H1 (cell line): ENCODE measurements at regions of chr18 and their contacts with region 1.

Region 1: DNA sequence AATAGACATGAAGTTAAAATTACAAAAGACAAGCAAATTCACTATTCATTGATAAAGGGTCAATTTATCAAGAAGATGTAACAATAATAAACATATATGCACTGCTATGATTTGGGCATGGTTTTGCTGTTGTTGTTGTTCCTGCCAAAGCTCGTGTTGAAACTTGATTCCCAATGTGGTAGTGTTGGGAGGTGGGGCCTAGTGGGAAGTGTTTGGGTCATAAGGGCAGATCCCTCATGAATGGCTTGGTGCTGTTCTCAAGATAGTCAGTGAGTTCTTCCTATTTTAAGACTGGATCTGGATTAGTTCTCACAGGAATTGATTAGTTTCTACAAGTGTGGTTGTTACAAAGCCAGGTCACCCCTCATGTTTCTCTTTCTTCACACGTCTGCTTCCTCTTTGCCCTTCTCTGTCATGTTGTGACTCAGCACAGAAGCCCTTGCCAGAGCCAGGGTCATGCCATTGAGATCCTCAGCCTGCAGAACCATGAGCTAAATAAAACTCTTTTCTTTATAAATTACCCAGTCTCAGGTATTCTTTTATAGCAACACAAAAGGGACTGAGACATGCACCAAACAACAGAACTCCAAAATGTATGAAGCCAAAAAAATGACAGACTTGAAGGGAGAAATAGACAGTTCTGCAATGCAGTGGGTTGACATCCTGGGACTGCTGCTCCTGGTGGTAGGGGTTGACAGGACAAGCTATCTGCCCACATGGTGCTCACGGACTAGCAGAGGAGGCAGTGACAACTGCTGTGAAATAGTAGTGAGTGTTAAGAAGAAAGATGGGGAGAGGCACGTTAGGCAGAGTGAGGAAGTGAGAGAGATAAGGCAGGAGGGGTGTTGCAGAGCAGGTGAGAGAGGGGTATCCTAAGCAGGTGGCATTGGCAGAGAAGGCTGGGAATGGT is 18.6 kb upstream of the SKA1 start:
- DNase-seq: no peak
- H3K4me3 ChIP-seq: no peak overlapping the region
- H3K27ac ChIP-seq: no peak overlapping the region
- H3K4me1 ChIP-seq: peaks cover 0 to 4% (median 0%) of the 10 kb centered on the region in 4 experiments; a peak in 1 of 7 replicates
- H3K27me3 ChIP-seq: 0 out of 7 replicates have a peak, but pooled peaks cover 0 to 2% (median 0%) of the 10 kb centered on the region in 4 experiments
- CTCF ChIP-seq: peak in 2 of 3 experiments; percentile 33 to 39; a peak in 2 of 4 replicates
- EP300 ChIP-seq: no peak
- POLR2A ChIP-seq: no peak
- RAD21 ChIP-seq: peak in 1 of 2 experiments; percentile 10; a peak in 1 of 4 replicates

Region 2: DNA sequence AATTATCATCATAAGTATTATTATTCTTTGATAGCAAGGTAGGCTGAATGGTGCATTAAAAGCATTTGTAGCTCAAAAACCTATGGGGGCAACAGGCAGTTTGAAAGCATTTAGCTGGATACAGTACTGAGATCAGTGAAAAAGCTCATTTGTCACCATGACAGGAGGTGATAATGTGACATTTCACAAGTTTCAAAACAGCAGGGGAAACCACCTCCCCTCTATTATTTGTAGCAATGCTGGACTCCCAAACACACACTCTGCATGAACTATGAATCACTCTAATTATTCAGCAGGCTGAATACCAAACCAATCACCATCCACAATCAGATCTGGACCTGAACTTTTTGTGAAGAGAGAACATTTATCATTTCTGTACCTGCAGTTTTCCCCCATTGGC is 224.7 kb before region 1 on chr18:
- CTCF ChIA-PET with region 1: no interaction called
- POLR2A ChIA-PET with region 1: no interaction called
- DNase-seq: no peak
- H3K4me3 ChIP-seq: no peak overlapping the region
- H3K27ac ChIP-seq: no peak overlapping the region
- H3K4me1 ChIP-seq: peaks cover 3 to 11% (median 8%) of the 10 kb centered on the region in 4 experiments
- H3K27me3 ChIP-seq: no peaks in the 10 kb centered on the region
- CTCF ChIP-seq: no peak
- EP300 ChIP-seq: no peak
- POLR2A ChIP-seq: no peak
- RAD21 ChIP-seq: no peak

Region 3: DNA sequence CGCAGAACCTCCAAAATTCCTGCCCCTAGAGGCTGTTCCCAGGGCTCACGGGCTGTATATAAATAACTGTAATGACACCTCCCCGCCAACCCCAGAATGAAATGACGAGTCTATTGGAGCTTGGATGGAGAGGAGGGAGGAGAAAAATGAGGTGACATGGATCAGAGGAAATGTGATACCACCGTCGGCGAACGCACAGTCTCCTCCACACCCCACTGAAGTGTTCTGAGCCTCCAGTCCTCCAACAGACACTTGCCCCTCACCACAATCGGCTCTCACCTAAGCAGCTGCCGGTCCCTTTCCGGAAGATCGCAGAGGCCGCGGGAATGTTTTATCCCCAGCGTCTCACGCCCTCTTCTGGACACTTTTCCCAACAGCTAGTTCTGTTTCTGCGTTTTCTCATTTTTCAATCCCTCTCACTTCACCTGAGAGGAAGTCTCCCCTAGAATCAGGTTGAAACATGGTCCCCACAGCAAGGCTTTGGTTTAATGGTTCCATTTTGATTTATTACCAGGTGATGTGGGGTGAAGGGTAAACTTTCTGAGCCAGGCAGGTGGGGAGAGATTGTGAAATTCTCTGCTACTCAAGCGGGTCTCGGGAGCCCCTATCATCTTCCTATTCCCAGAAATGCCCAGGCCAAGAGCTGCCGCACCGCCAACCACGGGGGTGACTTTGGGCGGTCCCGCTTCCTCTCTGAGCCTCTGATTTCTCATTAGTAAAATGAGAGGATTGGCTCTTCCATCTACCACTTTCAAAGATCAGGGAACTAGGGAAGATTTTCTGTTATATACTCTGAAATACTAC is 152.3 kb before region 1 on chr18:
- CTCF ChIA-PET with region 1: interaction called, 28 read pairs
- POLR2A ChIA-PET with region 1: no interaction called
- DNase-seq: peak in 1 of 2 experiments; percentile 81
- H3K4me3 ChIP-seq: peak overlapping the region in 3 of 4 experiments; percentile 20 to 44 (median 34); a peak in 5 of 8 replicates
- H3K27ac ChIP-seq: no peak overlapping the region
- H3K4me1 ChIP-seq: no peaks in the 10 kb centered on the region
- H3K27me3 ChIP-seq: peaks cover 0 to 5% (median 0%) of the 10 kb centered on the region in 4 experiments; a peak in 2 of 7 replicates
- CTCF ChIP-seq: peak; percentile 50 to 80 (median 72)
- EP300 ChIP-seq: no peak
- POLR2A ChIP-seq: no peak
- RAD21 ChIP-seq: peak; percentile 88 to 90

Region 4: DNA sequence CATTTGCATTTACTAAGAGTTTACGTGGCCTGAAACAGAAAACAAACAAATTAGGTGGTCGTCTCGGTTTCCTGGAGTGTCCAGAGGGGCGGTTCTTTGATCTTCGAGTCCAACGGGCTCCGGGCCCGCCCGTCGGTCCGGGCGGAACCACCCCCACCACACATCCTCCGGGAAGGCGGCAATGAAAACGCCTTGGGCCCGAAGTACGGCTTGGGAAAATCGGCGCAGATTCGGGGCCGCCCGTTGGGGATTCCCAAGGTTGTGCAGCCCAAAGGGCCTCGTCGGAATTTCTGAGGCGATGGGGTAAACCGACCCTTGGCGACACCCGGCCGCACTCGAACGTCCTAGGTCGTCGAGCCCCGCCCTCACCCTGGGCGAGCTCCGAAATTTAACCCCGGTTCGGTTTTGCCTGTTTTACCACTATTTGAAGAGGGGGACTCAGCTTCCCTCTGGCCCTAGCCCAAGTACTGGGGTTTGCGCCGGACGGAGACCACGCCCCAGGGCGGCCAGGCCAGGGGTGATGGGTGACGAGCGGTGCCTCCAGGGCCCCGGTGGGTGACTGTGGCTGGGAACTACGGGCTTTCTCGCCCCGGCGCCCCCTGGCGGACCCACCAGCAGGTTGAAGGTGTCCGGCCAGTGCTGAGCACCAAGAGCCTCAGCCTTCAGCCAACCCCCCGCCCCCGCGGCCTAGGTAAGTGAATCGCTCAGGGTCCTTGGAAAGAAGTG is 88.1 kb before region 1 on chr18:
- CTCF ChIA-PET with region 1: interaction called, 14 read pairs
- POLR2A ChIA-PET with region 1: no interaction called
- DNase-seq: peak; percentile 75 to 94
- H3K4me3 ChIP-seq: peak overlapping the region; percentile 59 to 81 (median 68)
- H3K27ac ChIP-seq: no peak overlapping the region
- H3K4me1 ChIP-seq: peaks cover 0 to 7% (median 0%) of the 10 kb centered on the region in 4 experiments; a peak in 3 of 7 replicates
- H3K27me3 ChIP-seq: no peaks in the 10 kb centered on the region; a peak in 1 of 7 replicates
- CTCF ChIP-seq: peak; percentile 82 to 86 (median 83)
- EP300 ChIP-seq: no peak
- POLR2A ChIP-seq: peak in 1 of 2 experiments; percentile 56; a peak in 1 of 3 replicates
- RAD21 ChIP-seq: peak; percentile 54 to 73

Region 5: DNA sequence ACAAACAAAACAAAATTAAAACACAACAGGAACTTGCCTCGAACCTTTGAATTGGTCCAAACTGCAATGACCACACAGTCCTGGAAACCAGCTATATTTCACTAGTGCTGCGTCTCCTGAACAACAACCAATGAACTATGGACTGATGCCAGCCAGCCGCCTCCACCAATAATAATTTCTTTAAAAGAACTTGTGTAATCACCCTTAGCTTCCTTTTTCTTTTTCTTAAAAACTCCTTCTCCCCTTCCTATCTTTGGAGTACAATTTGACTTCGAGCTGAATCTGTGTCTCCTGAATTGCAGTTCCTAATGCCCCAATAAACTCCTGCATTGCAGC is 67.2 kb before region 1 on chr18:
- CTCF ChIA-PET with region 1: interaction called, 11 read pairs
- POLR2A ChIA-PET with region 1: no interaction called
- DNase-seq: no peak
- H3K4me3 ChIP-seq: no peak overlapping the region
- H3K27ac ChIP-seq: no peak overlapping the region
- H3K4me1 ChIP-seq: peaks cover 0 to 5% (median 2%) of the 10 kb centered on the region in 4 experiments; a peak in 3 of 7 replicates
- H3K27me3 ChIP-seq: no peaks in the 10 kb centered on the region
- CTCF ChIP-seq: no peak
- EP300 ChIP-seq: no peak
- POLR2A ChIP-seq: no peak
- RAD21 ChIP-seq: no peak

Region 6: DNA sequence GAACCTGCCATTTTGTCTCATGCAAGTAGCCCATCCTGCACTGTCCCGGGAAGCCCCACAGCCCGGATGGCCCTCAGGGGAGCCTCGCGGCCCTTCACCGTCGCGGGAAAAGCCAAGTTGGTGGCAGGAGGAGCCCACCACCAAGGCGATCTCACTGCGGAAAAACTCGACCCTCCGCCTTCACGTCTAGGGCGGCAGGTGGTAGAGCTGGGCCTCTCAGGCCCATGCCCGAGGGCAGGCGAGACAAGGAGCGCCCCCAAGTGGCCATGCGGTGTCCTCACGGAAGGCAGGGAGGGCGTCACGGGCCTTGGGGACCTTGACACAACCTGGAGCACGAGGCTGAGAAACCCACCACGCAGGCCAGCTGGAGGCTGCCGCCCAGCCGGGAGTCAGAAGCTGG is 16.2 kb before region 1 on chr18:
- CTCF ChIA-PET with region 1: interaction called, 38 read pairs
- POLR2A ChIA-PET with region 1: no interaction called
- DNase-seq: peak; percentile 7 to 85
- H3K4me3 ChIP-seq: no peak overlapping the region
- H3K27ac ChIP-seq: no peak overlapping the region
- H3K4me1 ChIP-seq: no peaks in the 10 kb centered on the region
- H3K27me3 ChIP-seq: no peaks in the 10 kb centered on the region
- CTCF ChIP-seq: peak; percentile 70 to 87 (median 83)
- EP300 ChIP-seq: no peak
- POLR2A ChIP-seq: no peak
- RAD21 ChIP-seq: peak; percentile 62 to 76

Region 7: DNA sequence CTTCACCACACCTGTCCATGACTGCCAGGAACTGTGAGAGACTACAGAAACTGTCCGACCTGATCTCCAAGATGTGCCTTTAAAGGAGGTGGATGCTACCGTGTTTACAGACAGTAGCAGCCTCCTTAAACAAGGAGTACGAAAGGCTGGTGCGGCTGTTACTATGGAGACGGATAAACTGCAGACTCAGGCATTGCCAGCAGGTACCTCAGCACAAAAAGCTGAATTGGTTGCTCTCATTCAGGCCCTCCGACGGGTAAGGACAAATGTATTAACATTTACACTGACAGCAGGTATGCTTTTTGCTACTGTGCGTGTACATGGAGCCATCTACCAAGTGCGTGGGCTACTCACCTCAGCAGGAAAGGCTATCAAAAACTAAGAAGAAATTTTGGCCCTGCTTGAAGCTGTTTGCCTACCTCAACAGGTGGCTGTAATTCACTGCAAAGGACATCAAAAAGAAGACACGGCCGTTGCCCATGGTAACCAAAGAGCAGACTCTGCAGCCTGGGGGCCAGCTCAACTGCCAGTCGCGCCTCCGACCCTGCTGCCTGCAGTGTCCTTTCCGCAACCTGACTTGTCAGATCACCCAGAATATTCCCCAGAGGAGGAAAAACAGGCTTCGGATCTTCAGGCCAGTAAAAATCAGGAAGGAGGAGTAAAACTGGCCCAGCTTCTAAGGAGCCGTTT is 49.4 kb after region 1 on chr18:
- CTCF ChIA-PET with region 1: interaction called, 20 read pairs
- POLR2A ChIA-PET with region 1: no interaction called
- DNase-seq: peak in 1 of 2 experiments; percentile 56
- H3K4me3 ChIP-seq: no peak overlapping the region
- H3K27ac ChIP-seq: no peak overlapping the region
- H3K4me1 ChIP-seq: peaks cover 2 to 37% (median 27%) of the 10 kb centered on the region in 4 experiments; a peak in 6 of 7 replicates
- H3K27me3 ChIP-seq: peaks cover 2 to 27% (median 15%) of the 10 kb centered on the region in 4 experiments; a peak in 5 of 7 replicates
- CTCF ChIP-seq: no peak
- EP300 ChIP-seq: no peak
- POLR2A ChIP-seq: no peak
- RAD21 ChIP-seq: no peak

Region 8: GRCh38 chr18:50429207-50429948 is 73.1 kb after region 1 on chr18:
- CTCF ChIA-PET with region 1: interaction called, 30 read pairs
- POLR2A ChIA-PET with region 1: no interaction called
- DNase-seq: no peak
- H3K4me3 ChIP-seq: no peak overlapping the region
- H3K27ac ChIP-seq: no peak overlapping the region
- H3K4me1 ChIP-seq: no peaks in the 10 kb centered on the region
- H3K27me3 ChIP-seq: no peaks in the 10 kb centered on the region
- CTCF ChIP-seq: peak in 2 of 3 experiments; percentile 5 to 21; a peak in 2 of 4 replicates
- EP300 ChIP-seq: no peak
- POLR2A ChIP-seq: no peak
- RAD21 ChIP-seq: peak; percentile 44 to 45; a peak in 3 of 4 replicates